ENCODE measurements at regions of chr10 and their contacts with region 1.

Region 1: GRCh38 chr10:100433253-100434240 is 29.3 kb upstream of the WNT8B start:
- DNase-seq: peak; percentile 55
- H3K4me3 ChIP-seq: no peak overlapping the region
- CTCF ChIP-seq: peak; percentile 89

Region 2: GRCh38 chr10:100327007-100327717 is 106.4 kb before region 1 on chr10:
- CTCF ChIA-PET with region 1: interaction called, 37 read pairs
- POLR2A ChIA-PET with region 1: no interaction called
- DNase-seq: no peak
- H3K4me3 ChIP-seq: no peak overlapping the region
- CTCF ChIP-seq: no peak

Region 3: GRCh38 chr10:100346765-100347567 is 86.6 kb before region 1 on chr10 and contains the start of gene SCD:
- CTCF ChIA-PET with region 1: interaction called, 522 read pairs
- POLR2A ChIA-PET with region 1: no interaction called
- DNase-seq: peak; percentile 54
- H3K4me3 ChIP-seq: peak within 1 kb of the TSS; percentile 84
- CTCF ChIP-seq: no peak

Region 4: DNA sequence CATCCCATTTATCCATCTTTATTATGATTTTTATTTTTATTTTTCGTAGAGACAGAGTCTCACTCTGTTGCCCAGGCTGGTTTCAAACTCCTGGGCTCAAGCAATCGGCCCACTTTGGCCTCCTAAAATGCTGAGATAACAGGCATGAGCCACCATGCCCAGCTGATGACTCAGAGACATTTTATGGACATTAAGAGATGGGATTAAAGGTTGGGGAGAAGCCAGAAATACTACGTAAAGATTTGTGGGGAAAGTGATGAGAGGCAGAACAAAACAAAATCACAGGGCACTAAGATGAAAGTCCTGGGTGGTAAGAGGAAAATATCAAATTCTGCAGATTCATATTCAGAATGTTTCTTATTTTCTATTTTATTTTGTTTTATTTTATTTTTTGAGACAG is 36.8 kb after region 1 on chr10:
- CTCF ChIA-PET with region 1: interaction called, 26 read pairs
- POLR2A ChIA-PET with region 1: no interaction called
- DNase-seq: no peak
- H3K4me3 ChIP-seq: no peak overlapping the region
- CTCF ChIP-seq: no peak

Region 5: DNA sequence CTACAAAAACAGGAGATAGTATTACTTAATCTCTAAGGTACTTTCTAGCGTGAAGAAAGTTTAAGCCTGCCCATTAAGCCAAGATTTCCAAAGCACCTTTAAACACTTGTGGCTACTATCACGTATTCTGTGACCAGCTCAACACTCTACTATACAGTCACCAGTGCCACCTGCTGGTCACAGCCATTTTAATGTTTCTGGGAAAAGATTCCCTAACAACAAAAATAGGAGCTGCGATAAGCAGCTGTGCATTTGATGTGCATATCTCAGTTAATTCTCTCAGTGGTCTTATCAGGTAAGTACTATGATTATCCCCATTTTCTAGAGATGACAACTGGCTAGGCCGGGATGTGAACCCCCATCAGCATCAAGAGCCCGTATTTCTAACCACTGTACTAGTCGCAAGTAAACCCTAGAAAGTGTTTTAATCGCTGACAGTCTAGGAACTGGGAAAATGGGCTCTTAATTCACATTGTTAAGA is 85.3 kb after region 1 on chr10:
- CTCF ChIA-PET with region 1: interaction called, 555 read pairs
- POLR2A ChIA-PET with region 1: no interaction called
- DNase-seq: no peak
- H3K4me3 ChIP-seq: no peak overlapping the region
- CTCF ChIP-seq: peak; percentile 58

Region 6: GRCh38 chr10:100791369-100792058 is 358.0 kb after region 1 on chr10:
- CTCF ChIA-PET with region 1: no interaction called
- POLR2A ChIA-PET with region 1: no interaction called
- DNase-seq: no peak
- H3K4me3 ChIP-seq: no peak overlapping the region
- CTCF ChIP-seq: no peak

Region 7: GRCh38 chr10:101373063-101373462 is 939.5 kb after region 1 on chr10:
- CTCF ChIA-PET with region 1: no interaction called
- POLR2A ChIA-PET with region 1: no interaction called
- DNase-seq: no peak
- H3K4me3 ChIP-seq: no peak overlapping the region
- CTCF ChIP-seq: no peak